ENCODE measurements at regions of chr4 and their contacts with region 1.

Region 1: GRCh38 chr4:10959586-10959985 is 275.0 kb upstream of the CLNK start:
- DNase-seq: no peak
- H3K4me3 ChIP-seq: no peak overlapping the region
- H3K27ac ChIP-seq: no peak overlapping the region
- H3K4me1 ChIP-seq: peaks cover 3% of the 10 kb centered on the region
- H3K27me3 ChIP-seq: no peaks in the 10 kb centered on the region
- CTCF ChIP-seq: no peak

Region 2: DNA sequence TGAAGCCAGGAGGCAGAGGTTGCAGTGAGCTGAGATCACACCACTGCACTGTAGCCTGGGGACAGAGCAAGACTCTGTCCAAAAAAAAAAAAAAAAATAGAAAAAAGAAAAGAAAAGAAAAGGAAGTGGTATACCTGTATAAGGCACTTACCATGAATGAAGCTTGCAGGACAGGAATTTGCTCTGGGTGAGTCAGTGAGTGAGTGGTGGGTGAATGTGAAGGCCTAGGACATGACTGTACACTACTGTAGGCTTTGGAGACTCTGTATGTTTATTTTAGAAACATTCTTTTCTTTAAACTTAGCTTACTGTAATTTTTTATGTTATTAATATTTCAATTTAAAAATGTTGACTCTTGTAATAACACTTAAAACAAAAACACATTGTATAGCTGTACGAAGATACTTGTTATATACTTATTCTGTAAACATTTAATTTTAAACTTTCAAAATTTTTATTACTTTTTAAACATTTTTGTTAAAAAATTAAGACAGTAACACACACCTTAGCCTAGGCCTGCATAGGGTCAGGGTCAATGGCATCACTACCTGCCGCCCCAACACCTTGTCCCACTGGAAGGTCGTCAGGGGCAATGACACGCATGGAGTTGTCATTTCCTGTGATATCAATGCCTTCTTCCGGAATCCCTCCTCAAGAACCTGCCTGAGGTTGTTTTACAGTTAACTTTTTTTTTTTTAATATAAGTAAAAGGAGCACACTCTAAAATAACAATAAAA is 353.7 kb before region 1 on chr4:
- CTCF ChIA-PET with region 1: no interaction called
- dilution Hi-C with region 1: no loop called
- in situ Hi-C with region 1: no loop called
- intact Hi-C with region 1: loop called (anchors 10 kb)
- DNase-seq: peak; percentile 85
- H3K4me3 ChIP-seq: no peak overlapping the region
- H3K27ac ChIP-seq: peak overlapping the region; percentile 79
- H3K4me1 ChIP-seq: peaks cover 9% of the 10 kb centered on the region
- H3K27me3 ChIP-seq: no peaks in the 10 kb centered on the region
- CTCF ChIP-seq: no peak

Measured in mammary epithelial cell (primary cell).